ENCODE measurements at regions of chr15 and their contacts with region 1.

Region 1: DNA sequence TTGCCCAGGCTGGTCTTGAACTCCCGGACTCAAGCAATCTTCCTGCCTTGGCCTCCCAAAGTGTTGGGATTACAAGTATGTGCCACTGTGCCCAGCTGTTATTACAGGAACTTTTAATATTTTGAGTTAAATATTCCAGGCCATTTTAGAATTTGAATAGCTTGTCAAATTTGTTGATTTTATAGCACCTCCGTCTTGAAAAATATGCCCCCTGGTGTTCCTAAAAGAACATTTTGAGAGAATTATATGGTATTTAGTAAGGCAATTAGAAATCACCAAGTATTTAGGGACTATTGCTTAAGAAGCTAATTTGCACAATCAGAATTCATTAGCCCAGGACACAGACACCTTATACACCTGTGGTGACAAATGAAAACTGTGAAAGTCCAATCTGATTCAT is 23.7 kb downstream of the PDE8A start:
- DNase-seq: no peak
- ATAC-seq: no peak
- H3K4me3 ChIP-seq: no peak overlapping the region
- H3K27ac ChIP-seq: no peak overlapping the region
- H3K4me1 ChIP-seq: peaks cover 11 to 45% of the 10 kb centered on the region in 2 experiments; a peak in 4 of 5 replicates
- H3K27me3 ChIP-seq: no peaks in the 10 kb centered on the region
- CTCF ChIP-seq: peak in 1 of 3 experiments; percentile 25; a peak in 3 of 6 replicates
- EP300 ChIP-seq: no peak
- POLR2A ChIP-seq: no peak
- RAD21 ChIP-seq: peak in 1 of 2 experiments; percentile 22; a peak in 2 of 4 replicates

Region 2: GRCh38 chr15:84955089-84955848 is 50.0 kb before region 1 on chr15:
- CTCF ChIA-PET with region 1: interaction called, 5 read pairs
- POLR2A ChIA-PET with region 1: interaction called, 4 read pairs
- in situ Hi-C with region 1: no loop called
- intact Hi-C with region 1: loop called (anchors 1 kb)
- DNase-seq: peak; percentile 65 to 87 (median 72)
- ATAC-seq: peak; percentile 82
- H3K4me3 ChIP-seq: no peak overlapping the region
- H3K27ac ChIP-seq: peak overlapping the region; percentile 25; the same call in 1 of the 3 replicates
- H3K4me1 ChIP-seq: peaks cover 44 to 56% of the 10 kb centered on the region in 2 experiments
- H3K27me3 ChIP-seq: no peaks in the 10 kb centered on the region
- CTCF ChIP-seq: peak; percentile 85 to 92 (median 90)
- EP300 ChIP-seq: peak; percentile 39; the same call in 1 of the 2 replicates
- POLR2A ChIP-seq: no peak
- RAD21 ChIP-seq: peak; percentile 84 to 94

Region 3: DNA sequence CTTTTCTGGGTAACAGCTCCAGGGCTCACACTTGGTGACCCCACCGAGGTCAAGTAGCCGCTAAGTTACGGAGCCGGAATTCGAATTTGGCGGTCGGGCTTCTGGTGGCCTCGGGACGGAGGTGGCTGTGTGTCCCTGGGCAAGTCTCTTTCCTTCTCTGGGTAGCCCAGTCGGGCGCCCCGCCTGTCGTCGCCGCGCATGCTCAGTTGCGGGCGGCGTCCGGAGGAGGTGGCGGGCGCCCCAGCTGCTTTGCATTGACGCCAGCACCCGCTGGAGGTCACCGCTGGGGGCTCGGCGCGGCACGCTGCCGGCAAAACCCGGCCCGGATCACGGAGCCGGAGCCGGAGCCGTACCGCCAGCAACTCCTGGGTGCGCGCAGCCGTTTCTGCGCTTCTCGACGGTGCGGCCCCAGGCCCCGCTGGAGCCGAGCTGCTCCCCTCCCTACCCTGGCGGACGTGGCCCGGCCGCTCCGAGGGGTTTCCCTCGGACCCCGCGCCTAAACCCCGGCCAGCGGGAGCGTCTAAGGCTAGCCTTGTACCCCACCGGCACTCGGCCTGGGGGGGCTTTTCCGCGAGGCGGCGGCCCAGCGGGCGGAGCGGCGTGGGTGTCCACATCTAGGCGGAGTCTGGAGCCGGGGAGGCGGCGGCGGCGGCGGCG is 24.1 kb before region 1 on chr15:
- CTCF ChIA-PET with region 1: no interaction called
- POLR2A ChIA-PET with region 1: interaction called, 11 read pairs
- in situ Hi-C with region 1: no loop called
- intact Hi-C with region 1: loop called (anchors 2 kb)
- DNase-seq: peak; percentile 96 to 99 (median 97)
- ATAC-seq: peak; percentile 82
- H3K4me3 ChIP-seq: peak overlapping the region; percentile 71
- H3K27ac ChIP-seq: peak overlapping the region; percentile 93
- H3K4me1 ChIP-seq: peaks cover 28 to 31% of the 10 kb centered on the region in 2 experiments
- H3K27me3 ChIP-seq: no peaks in the 10 kb centered on the region
- CTCF ChIP-seq: peak; percentile 43 to 66 (median 49); a peak in 4 of 6 replicates
- EP300 ChIP-seq: peak; percentile 42; the same call in 1 of the 2 replicates
- POLR2A ChIP-seq: peak; percentile 64
- RAD21 ChIP-seq: peak; percentile 4 to 20; a peak in 2 of 4 replicates

Region 4: DNA sequence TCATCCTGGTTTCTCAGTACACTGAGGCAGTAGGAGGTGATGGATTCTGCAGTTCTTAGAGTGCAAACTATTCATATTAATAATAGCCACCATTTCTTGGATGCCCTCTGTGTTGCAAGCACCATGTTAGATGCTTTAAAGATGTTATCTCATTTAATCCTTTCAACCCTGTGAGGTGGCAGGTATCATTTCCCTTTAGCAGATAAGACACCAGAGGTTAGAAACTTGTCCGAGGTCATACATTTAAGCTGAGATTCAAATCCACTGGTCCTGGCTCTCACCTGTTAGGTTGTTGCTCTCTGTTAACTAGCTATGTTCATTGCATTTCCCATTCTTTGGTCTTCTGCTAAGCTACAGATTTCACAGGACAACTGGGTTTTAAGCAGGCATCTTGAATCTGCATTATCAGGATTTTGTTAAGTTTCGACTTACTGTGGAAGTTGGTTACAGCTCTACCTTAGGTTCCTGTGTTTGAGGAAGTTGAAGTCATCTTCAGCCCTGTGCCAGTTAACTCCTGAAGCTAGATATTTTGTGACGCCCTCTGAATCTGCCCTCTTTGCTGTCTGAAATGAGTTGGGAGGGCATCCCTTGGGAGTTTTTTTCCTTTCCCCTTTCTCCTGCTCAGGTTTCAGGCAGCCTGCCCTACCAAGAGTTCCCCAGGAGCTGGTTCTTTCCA is 17.2 kb before region 1 on chr15:
- CTCF ChIA-PET with region 1: no interaction called
- POLR2A ChIA-PET with region 1: interaction called, 11 read pairs
- in situ Hi-C with region 1: no loop called
- intact Hi-C with region 1: loop called (anchors 2 kb)
- DNase-seq: no peak
- ATAC-seq: no peak
- H3K4me3 ChIP-seq: no peak overlapping the region
- H3K27ac ChIP-seq: no peak overlapping the region
- H3K4me1 ChIP-seq: peaks cover 0 to 23% of the 10 kb centered on the region in 2 experiments; a peak in 4 of 5 replicates
- H3K27me3 ChIP-seq: no peaks in the 10 kb centered on the region
- CTCF ChIP-seq: no peak
- EP300 ChIP-seq: no peak
- POLR2A ChIP-seq: no peak
- RAD21 ChIP-seq: no peak